Prostate gland (tissue), 2 donors: ENCODE measurements at regions of chr1 and their contacts with region 1.

Region 1: DNA sequence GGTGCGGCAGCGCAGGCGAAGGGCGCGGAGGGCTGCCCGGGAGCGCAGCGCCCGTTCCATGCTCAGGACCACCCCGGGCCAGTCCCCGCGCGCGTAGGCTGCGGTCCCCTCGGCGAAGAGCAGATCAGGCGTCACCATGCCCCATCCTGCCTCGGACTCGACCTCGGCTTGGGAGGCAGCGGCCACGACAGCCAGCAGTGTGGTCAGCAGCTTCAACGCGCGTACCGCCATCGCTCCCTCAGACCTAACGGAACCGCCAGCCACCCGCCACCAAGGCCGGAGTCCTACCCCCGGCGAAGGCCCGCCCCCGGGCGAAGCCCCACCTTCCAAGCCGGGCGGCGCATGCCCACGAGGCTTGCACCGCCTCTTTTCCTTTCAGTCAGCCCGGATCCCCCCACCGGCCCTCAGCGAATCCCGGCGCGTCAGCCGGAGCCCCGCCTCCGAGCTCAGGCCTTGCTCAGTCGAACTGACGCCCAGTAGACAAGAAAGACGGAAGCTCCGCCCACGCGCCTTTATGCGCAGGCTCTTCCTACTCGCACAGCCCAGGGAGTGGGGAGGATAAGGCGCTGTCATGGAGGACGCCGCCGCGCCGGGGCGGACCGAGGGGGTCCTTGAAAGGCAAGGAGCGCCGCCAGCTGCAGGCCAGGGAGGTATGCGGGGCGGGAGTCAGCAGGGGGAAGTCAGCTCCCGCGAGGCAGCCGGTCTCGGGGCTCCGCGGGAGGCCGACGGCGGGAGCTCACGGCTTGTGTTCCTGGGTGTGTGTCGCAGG is at the starts of genes C1orf50 and P3H1:
- DNase-seq: peak; percentile 100
- H3K4me3 ChIP-seq: peak within 1 kb of the TSS; percentile 86 to 95
- H3K27ac ChIP-seq: peak within 1 kb of the TSS; percentile 82 to 85
- H3K4me1 ChIP-seq: peaks cover 9% of the 10 kb centered on the region
- H3K27me3 ChIP-seq: no peaks in the 10 kb centered on the region
- CTCF ChIP-seq: peak in 1 of 4 experiments; percentile 20
- POLR2A ChIP-seq: peak; percentile 99
- total RNA-seq, gene C1orf50: 3.3 to 3.6 TPM
- total RNA-seq, gene P3H1: 21.0 to 52.1 TPM

Region 2: GRCh38 chr1:42462828-42463763 is 303.8 kb before region 1 on chr1 and contains the start of gene CCDC30:
- intact Hi-C with region 1: loop called (anchors 10 kb)
- DNase-seq: peak; percentile 98
- H3K4me3 ChIP-seq: peak within 1 kb of the TSS; percentile 40 to 59
- H3K27ac ChIP-seq: peak within 1 kb of the TSS in 1 of 2 donors; percentile 11
- H3K4me1 ChIP-seq: no peaks in the 10 kb centered on the region
- H3K27me3 ChIP-seq: no peaks in the 10 kb centered on the region
- CTCF ChIP-seq: no peak
- POLR2A ChIP-seq: no peak
- total RNA-seq, gene CCDC30: 1.8 to 6.2 TPM

Region 3: DNA sequence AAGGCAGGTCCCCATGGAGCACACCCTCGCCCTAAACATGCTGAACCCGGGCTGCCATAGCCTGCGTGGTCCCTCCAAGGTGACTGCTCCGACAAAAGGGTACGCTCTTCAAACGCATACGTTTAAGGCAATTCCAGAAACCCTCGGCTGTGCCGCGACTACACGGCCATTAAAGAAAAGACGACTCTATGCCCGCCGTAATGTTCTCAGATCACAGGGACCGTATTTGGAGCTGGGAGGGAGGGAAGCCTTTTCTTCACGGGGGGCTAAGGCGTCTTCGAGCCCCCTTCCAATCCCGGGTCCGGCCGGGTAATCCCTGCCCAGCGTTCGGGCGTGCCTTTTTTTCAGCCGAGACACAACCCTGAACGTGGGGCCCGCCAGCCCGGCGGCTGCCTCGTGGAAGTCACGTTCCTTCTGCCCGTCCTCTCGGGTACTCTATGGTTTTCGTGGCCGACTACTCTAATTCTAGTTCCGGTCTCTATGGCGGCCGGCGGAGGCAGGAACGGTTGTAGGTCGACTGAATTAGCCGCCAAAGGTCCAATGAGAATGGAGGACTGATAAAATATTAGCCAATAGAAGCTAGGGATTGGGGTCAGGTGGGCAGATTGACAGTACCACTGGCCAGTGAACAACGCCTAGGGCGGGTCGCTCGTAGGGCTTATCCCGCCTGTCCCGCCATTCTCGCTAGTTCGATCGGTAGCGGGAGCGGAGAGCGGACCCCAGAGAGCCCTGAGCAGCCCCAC is 85.0 kb before region 1 on chr1 and contains the start of gene YBX1:
- intact Hi-C with region 1: loop called (anchors 2 kb)
- DNase-seq: peak; percentile 99
- H3K4me3 ChIP-seq: peak within 1 kb of the TSS; percentile 84 to 89
- H3K27ac ChIP-seq: peak within 1 kb of the TSS; percentile 75 to 94
- H3K4me1 ChIP-seq: peaks cover 8% of the 10 kb centered on the region
- H3K27me3 ChIP-seq: no peaks in the 10 kb centered on the region
- CTCF ChIP-seq: peak in 1 of 4 experiments; percentile 2
- POLR2A ChIP-seq: no peak
- total RNA-seq, gene YBX1: 325 to 406 TPM

Region 4: GRCh38 chr1:42815941-42816584 is 49.1 kb after region 1 on chr1:
- intact Hi-C with region 1: loop called (anchors 2 kb)
- DNase-seq: no peak
- H3K4me3 ChIP-seq: peak overlapping the region; percentile 63 to 86
- H3K27ac ChIP-seq: peak overlapping the region; percentile 96 to 98
- H3K4me1 ChIP-seq: peaks cover 5% of the 10 kb centered on the region
- H3K27me3 ChIP-seq: no peaks in the 10 kb centered on the region
- CTCF ChIP-seq: no peak
- POLR2A ChIP-seq: no peak

Region 5: GRCh38 chr1:42924082-42924850 is 157.3 kb after region 1 on chr1:
- intact Hi-C with region 1: loop called (anchors 10 kb)
- DNase-seq: peak; percentile 92
- H3K4me3 ChIP-seq: peak overlapping the region; percentile 73 to 85
- H3K27ac ChIP-seq: peak overlapping the region; percentile 89 to 90
- H3K4me1 ChIP-seq: no peaks in the 10 kb centered on the region
- H3K27me3 ChIP-seq: no peaks in the 10 kb centered on the region
- CTCF ChIP-seq: peak in 2 of 4 experiments; percentile 38 to 47
- POLR2A ChIP-seq: peak; percentile 88